ENCODE measurements at regions of chr11 and their contacts with region 1.

Region 1: GRCh38 chr11:78645226-78646202 is 70.8 kb upstream of the NARS2 start:
- DNase-seq: peak; percentile 87
- ATAC-seq: peak; percentile 94
- H3K4me3 Mint-ChIP-seq: no peak overlapping the region
- H3K27ac Mint-ChIP-seq: no peak overlapping the region
- H3K4me1 Mint-ChIP-seq: peaks cover under 1% of the 10 kb centered on the region
- H3K27me3 Mint-ChIP-seq: no peaks in the 10 kb centered on the region
- CTCF ChIP-seq: peak; percentile 93

Region 2: GRCh38 chr11:78622666-78623065 is 22.8 kb before region 1 on chr11:
- CTCF ChIA-PET with region 1: no interaction called
- POLR2A ChIA-PET with region 1: no interaction called
- DNase-seq: no peak
- ATAC-seq: no peak
- H3K4me3 Mint-ChIP-seq: no peak overlapping the region
- H3K27ac Mint-ChIP-seq: no peak overlapping the region
- H3K4me1 Mint-ChIP-seq: no peaks in the 10 kb centered on the region
- H3K27me3 Mint-ChIP-seq: peaks cover 15% of the 10 kb centered on the region
- CTCF ChIP-seq: no peak

Region 3: GRCh38 chr11:78659326-78660270 is 14.1 kb after region 1 on chr11:
- CTCF ChIA-PET with region 1: interaction called, 12 read pairs
- POLR2A ChIA-PET with region 1: interaction called, 6 read pairs
- DNase-seq: no peak
- ATAC-seq: peak; percentile 82
- H3K4me3 Mint-ChIP-seq: no peak overlapping the region
- H3K27ac Mint-ChIP-seq: no peak overlapping the region; the same call in 1 of the 2 replicates
- H3K4me1 Mint-ChIP-seq: peaks cover 8% of the 10 kb centered on the region
- H3K27me3 Mint-ChIP-seq: no peaks in the 10 kb centered on the region
- CTCF ChIP-seq: no peak

Region 4: GRCh38 chr11:78715639-78716311 is 70.3 kb after region 1 on chr11:
- CTCF ChIA-PET with region 1: interaction called, 396 read pairs
- POLR2A ChIA-PET with region 1: no interaction called
- DNase-seq: peak; percentile 89
- ATAC-seq: peak; percentile 99
- H3K4me3 Mint-ChIP-seq: no peak overlapping the region
- H3K27ac Mint-ChIP-seq: no peak overlapping the region
- H3K4me1 Mint-ChIP-seq: peaks cover 7% of the 10 kb centered on the region
- H3K27me3 Mint-ChIP-seq: no peaks in the 10 kb centered on the region
- CTCF ChIP-seq: peak; percentile 73

Region 5: GRCh38 chr11:78832226-78832947 is 186.9 kb after region 1 on chr11:
- CTCF ChIA-PET with region 1: interaction called, 10 read pairs
- POLR2A ChIA-PET with region 1: no interaction called
- DNase-seq: no peak
- ATAC-seq: no peak
- H3K4me3 Mint-ChIP-seq: no peak overlapping the region
- H3K27ac Mint-ChIP-seq: no peak overlapping the region
- H3K4me1 Mint-ChIP-seq: peaks cover 19% of the 10 kb centered on the region
- H3K27me3 Mint-ChIP-seq: no peaks in the 10 kb centered on the region
- CTCF ChIP-seq: no peak

Region 6: GRCh38 chr11:78961247-78961646 is 315.7 kb after region 1 on chr11:
- CTCF ChIA-PET with region 1: interaction called, 74 read pairs
- POLR2A ChIA-PET with region 1: interaction called, 5 read pairs
- DNase-seq: peak; percentile 61
- ATAC-seq: peak; percentile 89
- H3K4me3 Mint-ChIP-seq: peak overlapping the region; percentile 72
- H3K27ac Mint-ChIP-seq: no peak overlapping the region
- H3K4me1 Mint-ChIP-seq: peaks cover 33% of the 10 kb centered on the region
- H3K27me3 Mint-ChIP-seq: peaks cover 17% of the 10 kb centered on the region
- CTCF ChIP-seq: peak; percentile 21; the same call in 1 of the 2 replicates

Region 7: DNA sequence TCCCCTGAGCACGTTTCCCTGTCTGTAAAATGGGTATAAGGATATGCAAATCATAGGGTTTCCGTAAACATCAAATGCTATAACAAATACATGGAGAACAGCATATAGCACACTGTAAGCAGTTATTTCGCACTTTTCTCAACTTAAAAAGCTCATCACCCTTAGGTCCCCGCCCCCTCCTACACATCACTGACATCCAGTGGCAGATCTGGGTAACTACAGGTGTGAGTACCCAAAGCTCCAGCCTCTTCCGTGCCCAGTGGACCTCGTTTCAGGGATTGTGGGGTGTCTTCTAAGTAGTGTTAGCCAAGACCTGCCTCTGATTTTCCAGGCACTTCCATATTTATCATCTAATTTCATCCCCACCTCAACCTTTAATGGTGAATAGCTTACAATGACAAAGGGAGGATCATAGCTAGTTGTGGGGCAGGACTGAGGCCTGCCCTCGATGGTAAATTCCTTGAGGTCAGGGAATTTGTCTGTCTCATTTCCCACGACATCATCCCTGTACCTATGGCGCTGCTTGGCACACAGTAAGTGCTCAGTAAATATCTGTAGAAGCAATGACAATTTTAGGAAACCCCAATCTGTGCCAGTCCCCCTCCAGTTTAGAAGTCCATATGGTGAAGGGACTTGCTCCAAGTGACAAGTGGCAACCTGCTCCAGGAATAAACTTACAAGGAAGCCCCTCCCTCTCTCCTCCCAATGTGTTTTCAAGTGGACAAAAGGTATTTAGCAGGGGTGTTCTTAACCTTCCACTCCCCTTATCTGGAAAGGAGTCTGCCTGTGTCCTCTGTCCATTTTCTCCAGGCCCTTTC is 454.8 kb after region 1 on chr11:
- CTCF ChIA-PET with region 1: interaction called, 49 read pairs
- POLR2A ChIA-PET with region 1: no interaction called
- DNase-seq: peak; percentile 56
- ATAC-seq: peak; percentile 93
- H3K4me3 Mint-ChIP-seq: no peak overlapping the region
- H3K27ac Mint-ChIP-seq: no peak overlapping the region
- H3K4me1 Mint-ChIP-seq: peaks cover 6% of the 10 kb centered on the region
- H3K27me3 Mint-ChIP-seq: no peaks in the 10 kb centered on the region; the same call in 1 of the 2 replicates
- CTCF ChIP-seq: peak; percentile 70

Measured in WTC11 (cell line).